ENCODE measurements at regions of chr2 and their contacts with region 1.

Region 1: DNA sequence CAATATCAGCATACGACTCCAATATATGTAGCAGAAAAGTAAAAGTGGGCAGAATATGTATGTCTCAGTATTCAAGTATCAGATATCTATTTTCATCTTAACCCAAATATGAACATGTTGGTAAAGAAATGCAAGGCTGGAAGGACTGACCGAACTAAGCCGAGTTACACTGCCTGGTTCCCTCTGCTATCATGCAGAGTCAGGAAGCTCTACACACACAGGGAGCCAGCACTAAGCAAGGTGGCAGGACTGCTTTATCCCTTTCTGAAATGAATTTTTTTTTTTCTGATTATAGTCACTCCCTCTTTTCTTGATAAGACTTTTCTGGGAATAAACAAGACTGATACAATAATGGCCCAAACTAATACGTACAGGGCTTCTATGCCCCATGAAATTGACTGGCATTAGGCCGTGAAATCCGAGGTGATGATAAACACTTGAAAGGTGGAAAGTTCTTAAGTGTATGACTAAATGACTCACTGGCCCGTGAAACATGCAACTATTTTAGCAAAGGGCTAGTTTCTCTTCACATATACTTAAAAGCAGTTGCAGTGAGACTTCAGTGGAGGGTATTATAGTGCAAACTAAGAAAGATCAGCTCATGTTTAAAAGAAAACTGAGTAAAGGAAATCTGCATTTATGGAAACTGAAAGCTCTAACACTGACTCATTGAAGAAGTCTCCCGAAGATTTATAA is 14.9 kb downstream of the DPP4 start:
- DNase-seq: peak; percentile 79
- H3K4me3 Mint-ChIP-seq: peak overlapping the region; percentile 79
- H3K27ac Mint-ChIP-seq: peak overlapping the region; percentile 95
- H3K4me1 Mint-ChIP-seq: peaks cover 81% of the 10 kb centered on the region
- H3K27me3 Mint-ChIP-seq: no peaks in the 10 kb centered on the region

Region 2: DNA sequence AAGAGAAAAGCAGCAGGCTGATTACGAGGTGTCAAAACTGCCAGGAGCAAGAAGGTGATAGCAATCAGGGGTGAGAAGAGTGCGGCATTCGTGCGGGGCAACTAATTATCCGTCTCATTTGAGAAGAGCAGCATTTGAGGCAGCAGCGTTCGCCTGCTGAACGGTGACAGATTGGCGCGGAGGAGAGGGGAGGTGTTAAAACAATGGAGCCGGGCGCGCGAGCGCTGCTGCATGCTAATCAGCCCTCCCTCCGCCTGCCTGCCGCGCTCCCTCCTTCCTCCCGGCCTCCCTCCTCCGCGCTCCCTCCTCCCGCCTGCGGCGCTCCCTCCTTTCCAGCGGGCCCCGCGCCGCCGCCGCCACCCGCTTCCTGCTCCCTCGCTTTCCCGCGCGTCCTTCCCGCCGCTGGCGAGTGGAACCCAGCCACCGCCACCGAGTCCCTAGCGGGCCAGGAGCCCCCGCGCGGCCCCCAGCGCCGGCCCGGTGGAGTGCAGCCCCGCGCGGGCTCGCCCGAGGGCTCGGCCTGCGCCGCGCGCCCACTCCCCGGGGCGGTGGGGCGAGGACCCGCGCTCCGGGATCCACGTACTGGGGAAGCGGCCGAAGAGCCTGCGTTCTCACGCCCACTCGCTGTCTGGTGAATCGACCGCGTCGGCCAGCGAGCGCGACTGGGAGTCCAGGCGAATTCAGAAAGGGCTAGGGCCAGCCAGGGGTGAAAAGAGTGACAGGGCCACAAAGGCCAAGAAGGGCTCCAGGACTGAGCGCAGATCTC is 820.4 kb before region 1 on chr2:
- intact Hi-C with region 1: loop called (anchors 10 kb)
- DNase-seq: peak; percentile 87
- H3K4me3 Mint-ChIP-seq: peak overlapping the region; percentile 92
- H3K27ac Mint-ChIP-seq: peak overlapping the region; percentile 82
- H3K4me1 Mint-ChIP-seq: peaks cover 41% of the 10 kb centered on the region
- H3K27me3 Mint-ChIP-seq: peaks cover 2% of the 10 kb centered on the region

Region 3: DNA sequence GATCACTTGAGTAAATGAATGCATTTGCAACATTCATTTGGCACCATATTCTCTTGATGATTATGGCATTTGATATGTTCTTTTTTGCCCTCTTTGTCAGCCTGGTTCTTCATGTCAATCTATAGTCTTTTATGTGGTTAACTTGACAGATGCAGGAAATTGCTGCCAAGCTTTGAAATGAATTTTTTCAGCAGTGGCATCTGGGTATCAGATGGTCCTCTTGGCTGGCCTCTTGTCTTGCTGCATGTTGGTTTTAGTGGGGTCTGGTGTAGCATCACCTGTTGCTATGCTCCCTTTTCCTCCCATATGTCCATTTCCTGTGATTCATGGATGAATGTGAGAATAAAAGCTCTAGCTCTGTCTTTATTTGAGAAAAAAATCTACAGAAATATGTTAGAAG is 105.0 kb before region 1 on chr2:
- intact Hi-C with region 1: loop called (anchors 1 kb)
- DNase-seq: peak; percentile 78
- H3K4me3 Mint-ChIP-seq: peak overlapping the region; percentile 50
- H3K27ac Mint-ChIP-seq: peak overlapping the region; percentile 86
- H3K4me1 Mint-ChIP-seq: peaks cover 57% of the 10 kb centered on the region
- H3K27me3 Mint-ChIP-seq: no peaks in the 10 kb centered on the region

Region 4: DNA sequence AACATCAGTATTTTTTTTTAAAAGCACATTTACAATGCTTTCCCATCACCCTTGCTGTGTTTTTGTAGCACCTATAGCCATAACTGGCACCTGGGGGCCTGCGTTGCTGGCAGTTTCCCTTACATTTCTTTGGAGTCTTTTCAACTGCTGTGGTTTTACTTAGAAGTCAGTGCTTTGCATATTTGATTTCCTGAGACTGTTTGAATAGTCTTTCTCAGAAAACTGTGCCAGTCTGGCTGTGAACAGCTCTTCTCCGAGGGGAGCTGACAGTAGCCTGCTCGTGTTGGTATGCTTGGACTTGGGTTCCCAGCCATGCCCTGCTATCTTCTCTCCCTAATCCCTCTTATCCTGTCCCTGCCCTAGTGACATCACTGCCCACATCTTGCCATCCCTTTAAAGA is 66.6 kb before region 1 on chr2:
- intact Hi-C with region 1: loop called (anchors 1 kb)
- DNase-seq: peak; percentile 90
- H3K4me3 Mint-ChIP-seq: peak overlapping the region; percentile 85
- H3K27ac Mint-ChIP-seq: peak overlapping the region; percentile 98
- H3K4me1 Mint-ChIP-seq: peaks cover 62% of the 10 kb centered on the region
- H3K27me3 Mint-ChIP-seq: no peaks in the 10 kb centered on the region

Region 5: DNA sequence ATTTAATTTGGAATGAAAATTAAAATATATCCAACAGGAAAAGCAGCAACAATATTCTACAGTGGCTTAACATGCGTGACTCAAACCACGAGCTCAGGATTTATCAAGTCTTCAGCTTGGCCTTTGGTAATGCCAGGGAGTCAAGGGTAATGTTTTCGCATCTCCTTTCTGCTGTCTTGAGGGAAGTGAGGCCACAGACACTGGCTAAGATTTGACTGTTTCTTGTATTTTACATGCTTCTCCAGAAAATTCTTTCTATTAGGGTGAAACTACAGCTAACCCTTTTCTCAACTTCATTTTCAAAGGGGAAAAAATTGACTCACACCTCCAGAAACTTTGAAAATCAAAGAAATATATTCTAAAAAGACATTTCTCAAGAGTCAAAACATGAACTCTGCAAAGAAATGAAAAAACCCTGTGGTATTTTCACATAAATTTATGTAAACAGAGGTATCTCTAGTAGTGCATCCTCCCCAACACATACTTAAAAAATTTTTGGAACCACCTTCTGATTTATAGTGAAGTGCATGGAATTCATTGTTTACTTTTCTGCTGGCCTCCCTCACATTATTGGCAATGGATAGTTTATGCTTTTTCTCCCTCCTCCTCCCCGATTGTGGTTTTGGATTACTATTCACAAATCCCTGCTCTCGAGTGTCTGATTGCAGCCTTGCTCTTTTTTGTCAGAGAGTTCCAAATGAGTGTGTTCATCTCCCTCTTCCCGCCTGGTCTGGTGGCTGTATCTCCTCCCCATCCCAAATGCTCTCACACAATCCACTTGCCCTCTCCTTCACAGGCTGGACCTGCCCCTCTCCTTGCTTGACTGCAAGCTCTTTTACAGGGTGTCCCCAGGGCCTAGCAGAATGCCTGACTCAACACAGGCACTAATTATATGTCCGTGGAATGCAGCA is 33.7 kb before region 1 on chr2:
- intact Hi-C with region 1: loop called (anchors 2 kb)
- DNase-seq: no peak
- H3K4me3 Mint-ChIP-seq: peak overlapping the region; percentile 1
- H3K27ac Mint-ChIP-seq: peak overlapping the region; percentile 14
- H3K4me1 Mint-ChIP-seq: peaks cover 54% of the 10 kb centered on the region
- H3K27me3 Mint-ChIP-seq: no peaks in the 10 kb centered on the region

Region 6: DNA sequence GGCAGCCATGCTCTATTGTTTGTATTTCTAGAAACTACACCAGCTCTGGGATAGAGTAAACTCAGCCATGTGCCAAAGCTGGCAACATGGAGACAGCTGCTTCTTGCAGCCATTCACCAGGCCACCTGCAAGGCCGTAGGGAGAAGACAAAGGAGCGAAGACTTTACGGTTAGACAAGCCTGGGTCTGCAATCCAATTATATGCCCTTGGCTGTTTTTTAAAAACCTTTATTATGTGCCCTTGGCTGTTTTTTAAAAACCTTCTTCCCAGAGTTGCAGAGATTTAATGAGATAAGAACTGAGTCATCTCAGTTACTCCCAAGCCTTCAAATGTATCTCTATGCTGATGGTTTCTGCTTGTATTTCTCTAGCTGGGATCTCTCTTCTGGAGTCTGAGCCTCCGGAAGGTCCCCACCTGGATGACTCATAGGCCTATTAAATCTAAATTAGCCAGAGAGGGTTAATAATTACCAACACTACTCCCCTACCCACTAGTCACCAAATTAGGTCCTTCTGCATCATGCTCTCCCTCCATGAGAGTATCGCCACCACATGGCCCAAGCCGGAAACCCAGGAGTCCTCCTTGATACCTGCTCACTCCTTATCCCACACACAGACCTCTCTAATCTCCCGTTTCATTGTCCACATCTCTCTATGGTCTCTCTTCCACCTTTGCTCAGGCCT is 32.3 kb after region 1 on chr2:
- intact Hi-C with region 1: loop called (anchors 2 kb)
- DNase-seq: no peak
- H3K4me3 Mint-ChIP-seq: no peak overlapping the region
- H3K27ac Mint-ChIP-seq: no peak overlapping the region
- H3K4me1 Mint-ChIP-seq: peaks cover 19% of the 10 kb centered on the region
- H3K27me3 Mint-ChIP-seq: no peaks in the 10 kb centered on the region

Region 7: DNA sequence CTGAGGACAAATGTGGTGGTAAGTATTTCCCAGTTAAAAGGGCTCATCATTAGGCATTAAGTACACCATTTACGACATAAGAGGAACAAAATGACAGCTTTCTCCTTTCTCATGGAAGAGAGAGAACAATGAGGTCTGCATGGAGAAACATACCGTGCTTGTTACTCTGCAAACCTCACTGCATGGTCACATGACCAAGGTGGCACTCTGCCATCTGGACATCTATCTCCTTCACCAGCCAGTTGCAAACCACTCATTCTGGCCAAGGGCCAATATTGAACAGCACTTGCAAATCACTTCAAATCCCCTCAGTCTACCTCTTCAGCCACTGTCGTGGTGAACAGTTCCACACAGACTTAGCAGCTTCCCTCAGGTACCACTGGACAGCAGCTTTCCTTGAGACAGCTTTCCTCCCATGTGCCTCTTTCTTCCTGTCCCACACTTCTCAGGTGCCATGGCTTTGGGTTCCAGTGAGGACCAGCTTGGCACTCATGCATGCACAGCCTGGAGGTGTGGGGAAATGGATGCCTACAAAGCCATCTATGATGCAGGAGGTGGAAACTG is 44.4 kb after region 1 on chr2:
- intact Hi-C with region 1: no loop called
- DNase-seq: no peak
- H3K4me3 Mint-ChIP-seq: no peak overlapping the region
- H3K27ac Mint-ChIP-seq: no peak overlapping the region
- H3K4me1 Mint-ChIP-seq: peaks cover 7% of the 10 kb centered on the region
- H3K27me3 Mint-ChIP-seq: no peaks in the 10 kb centered on the region

Region 8: GRCh38 chr2:162221064-162221463 is 161.9 kb after region 1 on chr2:
- intact Hi-C with region 1: no loop called
- DNase-seq: peak; percentile 88
- H3K4me3 Mint-ChIP-seq: no peak overlapping the region
- H3K27ac Mint-ChIP-seq: no peak overlapping the region
- H3K4me1 Mint-ChIP-seq: no peaks in the 10 kb centered on the region
- H3K27me3 Mint-ChIP-seq: peaks cover 57% of the 10 kb centered on the region

Region 9: GRCh38 chr2:162967147-162967546 is 908.0 kb after region 1 on chr2:
- intact Hi-C with region 1: no loop called
- DNase-seq: no peak
- H3K4me3 Mint-ChIP-seq: no peak overlapping the region
- H3K27ac Mint-ChIP-seq: no peak overlapping the region
- H3K4me1 Mint-ChIP-seq: no peaks in the 10 kb centered on the region
- H3K27me3 Mint-ChIP-seq: no peaks in the 10 kb centered on the region